ENCODE measurements at regions of chr4 and their contacts with region 1.

Region 1: DNA sequence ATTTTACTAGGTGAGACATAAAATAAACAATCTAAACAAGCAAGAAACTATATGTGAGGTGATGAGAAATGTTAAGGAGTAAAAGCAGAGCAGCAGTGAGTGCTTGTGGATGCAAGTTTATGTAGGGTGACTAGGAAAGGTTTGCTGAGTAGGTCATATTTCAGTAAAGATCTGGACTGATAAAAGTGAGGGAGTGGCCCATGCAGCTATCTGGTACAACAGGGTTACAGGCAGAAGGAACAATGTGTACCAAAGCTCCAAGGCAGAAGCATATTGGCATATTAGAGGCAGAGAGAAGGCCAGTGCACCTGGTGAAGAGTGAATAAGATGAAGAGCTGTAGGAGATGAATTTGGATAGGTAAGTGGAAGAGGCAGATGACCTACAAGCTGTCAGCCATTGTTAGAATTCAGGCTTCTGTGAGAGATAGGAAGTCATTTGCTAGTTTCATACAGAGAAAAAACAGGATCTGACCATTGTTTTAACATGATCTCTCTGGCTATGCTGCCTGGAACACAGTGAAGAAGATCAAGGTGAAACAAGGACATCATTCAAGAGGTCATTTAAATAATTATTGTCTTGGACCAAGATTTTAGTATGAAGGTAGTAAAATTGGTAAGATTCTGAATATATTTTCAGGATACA is 274.6 kb downstream of the ANKRD50 start:
- DNase-seq: no peak
- H3K4me3 ChIP-seq: no peak overlapping the region
- H3K27ac ChIP-seq: peak overlapping the region; percentile 13
- H3K4me1 ChIP-seq: peaks cover 4% of the 10 kb centered on the region
- H3K27me3 ChIP-seq: no peaks in the 10 kb centered on the region
- CTCF ChIP-seq: no peak
- POLR2A ChIP-seq: no peak

Region 2: DNA sequence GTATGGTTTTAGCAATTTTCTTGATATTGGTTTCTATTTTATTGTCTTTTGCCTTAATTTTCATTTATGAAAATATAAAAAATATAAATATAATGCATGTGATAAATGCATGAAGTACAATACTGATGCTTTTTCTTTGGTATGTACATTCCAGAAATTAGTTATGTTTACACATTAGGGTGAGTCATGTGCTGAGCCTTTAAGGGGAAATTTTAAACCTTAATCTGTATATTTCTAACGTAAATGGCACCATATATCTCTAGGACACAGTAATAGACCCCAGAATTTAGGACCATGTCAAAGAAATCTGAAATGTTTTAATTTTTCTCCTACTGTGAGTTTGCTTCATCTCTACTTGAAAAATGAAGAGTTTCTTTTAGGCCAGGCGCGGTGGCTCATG is 1159.2 kb before region 1 on chr4:
- intact Hi-C with region 1: loop called (anchors 5 kb)
- DNase-seq: no peak
- H3K4me3 ChIP-seq: no peak overlapping the region
- H3K27ac ChIP-seq: no peak overlapping the region
- H3K4me1 ChIP-seq: peaks cover 2% of the 10 kb centered on the region
- H3K27me3 ChIP-seq: no peaks in the 10 kb centered on the region
- CTCF ChIP-seq: no peak
- POLR2A ChIP-seq: no peak

Region 3: GRCh38 chr4:124936427-124936826 is 498.5 kb after region 1 on chr4:
- intact Hi-C with region 1: no loop called
- DNase-seq: no peak
- H3K4me3 ChIP-seq: no peak overlapping the region
- H3K27ac ChIP-seq: no peak overlapping the region
- H3K4me1 ChIP-seq: peaks cover 42% of the 10 kb centered on the region
- H3K27me3 ChIP-seq: no peaks in the 10 kb centered on the region
- CTCF ChIP-seq: no peak
- POLR2A ChIP-seq: no peak